ENCODE measurements at regions of chr6 and their contacts with region 1.

Region 1: DNA sequence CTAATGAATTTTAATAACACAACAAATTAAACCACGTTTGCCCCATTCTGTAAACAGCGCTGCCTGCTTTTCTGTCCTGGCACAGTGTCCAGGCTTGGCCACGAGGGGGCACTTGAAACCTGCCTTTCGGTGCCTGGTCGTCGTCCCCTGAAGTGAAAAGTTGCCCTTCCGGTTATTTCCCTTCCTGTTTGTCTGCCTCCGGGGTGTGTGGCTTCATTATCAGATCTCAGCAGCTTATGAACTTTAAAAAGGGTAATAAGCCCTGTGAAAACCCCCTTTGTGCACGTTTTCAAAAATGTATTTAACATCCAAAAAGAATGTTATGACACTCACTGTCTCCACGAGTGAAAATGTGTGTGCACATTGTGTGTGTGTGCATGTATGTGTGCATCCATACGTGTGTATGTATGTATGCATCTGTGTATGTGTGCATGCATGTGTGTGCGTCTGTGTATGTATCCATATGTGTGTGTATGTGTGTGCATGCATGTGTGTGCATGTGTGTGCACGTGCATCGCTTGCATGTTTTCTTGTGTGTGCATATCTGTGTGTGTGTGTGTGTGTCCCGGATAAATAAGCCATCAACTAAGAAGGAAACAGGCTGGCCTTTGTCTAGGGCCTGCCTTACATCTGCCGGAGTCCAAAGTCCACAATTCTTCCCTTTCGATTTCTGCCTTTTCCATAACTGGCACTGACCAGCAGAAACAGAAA is 358.4 kb downstream of the THBS2 start:
- DNase-seq: peak; percentile 64
- H3K4me3 ChIP-seq: no peak overlapping the region
- H3K27ac ChIP-seq: no peak overlapping the region
- H3K4me1 ChIP-seq: peaks cover 4% of the 10 kb centered on the region
- H3K27me3 ChIP-seq: no peaks in the 10 kb centered on the region
- CTCF ChIP-seq: peak; percentile 95 to 96

Region 2: DNA sequence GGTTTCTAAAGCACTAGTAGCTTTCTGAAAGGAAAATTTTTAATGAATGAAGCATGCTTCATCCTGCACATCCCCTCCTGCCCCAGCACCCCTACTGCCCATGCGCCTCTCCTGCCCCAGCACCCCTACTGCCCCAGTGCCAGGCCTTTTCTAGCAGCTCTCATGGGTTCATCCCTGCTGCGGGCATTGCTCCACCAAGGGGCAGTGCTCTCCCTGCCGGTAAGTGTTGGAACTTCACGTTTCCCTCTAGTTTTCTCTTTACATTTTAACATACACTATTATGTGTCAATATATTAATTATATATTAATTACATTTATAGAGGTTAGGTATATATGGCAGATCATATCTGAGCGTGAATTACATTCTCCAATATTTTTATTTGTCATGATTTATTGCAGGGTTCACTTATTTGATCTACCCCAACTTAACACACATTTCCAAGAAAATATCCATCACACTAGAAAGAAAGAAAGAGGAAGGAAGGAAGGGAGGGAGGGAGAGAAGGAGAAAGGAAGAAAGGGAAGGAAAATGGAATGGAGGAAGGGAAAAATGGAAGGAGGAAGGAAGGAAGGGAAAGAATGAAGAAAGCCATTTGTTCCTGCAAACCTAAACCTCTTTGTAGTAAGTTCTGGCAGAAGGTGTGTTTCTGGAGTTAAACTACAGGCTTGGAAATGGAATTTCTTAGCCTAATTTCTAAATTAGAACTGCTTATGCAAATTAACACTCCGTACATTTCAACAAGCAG is 1849.2 kb before region 1 on chr6:
- CTCF ChIA-PET with region 1: interaction called, 13 read pairs
- dilution Hi-C with region 1: no loop called
- in situ Hi-C with region 1: no loop called
- intact Hi-C with region 1: no loop called
- DNase-seq: no peak
- H3K4me3 ChIP-seq: no peak overlapping the region
- H3K27ac ChIP-seq: no peak overlapping the region
- H3K4me1 ChIP-seq: no peaks in the 10 kb centered on the region
- H3K27me3 ChIP-seq: no peaks in the 10 kb centered on the region
- CTCF ChIP-seq: peak; percentile 35 to 51

Region 3: GRCh38 chr6:167907837-167908681 is 987.2 kb before region 1 on chr6:
- CTCF ChIA-PET with region 1: no interaction called
- dilution Hi-C with region 1: no loop called
- in situ Hi-C with region 1: loop called in 1 of 2 experiments (anchors 25 kb)
- intact Hi-C with region 1: no loop called
- DNase-seq: peak; percentile 50
- H3K4me3 ChIP-seq: no peak overlapping the region
- H3K27ac ChIP-seq: no peak overlapping the region
- H3K4me1 ChIP-seq: peaks cover 5% of the 10 kb centered on the region
- H3K27me3 ChIP-seq: no peaks in the 10 kb centered on the region
- CTCF ChIP-seq: peak; percentile 44 to 52

Region 4: DNA sequence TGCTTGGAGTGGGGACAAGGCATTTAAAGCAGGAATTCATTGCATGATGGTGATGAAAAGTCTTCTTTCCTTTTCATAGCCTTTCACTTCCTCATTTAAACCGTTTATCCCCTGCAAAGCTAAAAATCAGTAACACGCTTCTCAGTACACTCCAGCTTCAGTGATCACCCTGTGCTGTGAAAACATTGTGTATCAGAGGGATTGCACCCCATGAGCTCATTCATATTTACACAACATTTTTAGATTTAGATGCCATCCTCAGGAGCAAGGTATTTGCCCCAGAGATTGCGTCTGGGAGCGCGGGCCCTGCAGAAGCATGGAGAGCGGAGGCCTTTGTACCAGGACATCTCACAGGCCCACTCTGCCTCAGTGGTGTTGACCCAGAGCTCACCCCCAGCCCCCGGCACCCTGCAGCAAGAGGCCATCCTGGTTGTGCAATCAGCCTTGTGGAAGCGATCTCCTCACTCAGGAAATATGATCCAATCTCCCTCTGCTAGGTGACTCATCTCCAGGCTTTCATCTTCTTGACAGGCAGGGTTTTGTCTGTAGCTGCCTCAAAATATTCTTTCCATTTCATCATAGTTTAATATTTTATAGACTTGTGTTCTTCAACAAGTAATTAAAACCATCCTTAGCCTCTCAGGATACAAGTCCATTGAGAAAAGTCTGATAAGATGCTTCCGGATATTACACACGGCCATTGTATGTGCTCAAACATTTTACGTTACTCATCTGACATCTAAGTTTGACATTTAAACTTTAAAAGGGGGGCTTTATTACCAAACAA is 397.3 kb after region 1 on chr6:
- CTCF ChIA-PET with region 1: no interaction called
- dilution Hi-C with region 1: no loop called
- in situ Hi-C with region 1: no loop called
- intact Hi-C with region 1: no loop called
- DNase-seq: peak; percentile 91
- H3K4me3 ChIP-seq: no peak overlapping the region
- H3K27ac ChIP-seq: peak overlapping the region; percentile 50
- H3K4me1 ChIP-seq: peaks cover 67% of the 10 kb centered on the region
- H3K27me3 ChIP-seq: no peaks in the 10 kb centered on the region
- CTCF ChIP-seq: no peak

Region 5: DNA sequence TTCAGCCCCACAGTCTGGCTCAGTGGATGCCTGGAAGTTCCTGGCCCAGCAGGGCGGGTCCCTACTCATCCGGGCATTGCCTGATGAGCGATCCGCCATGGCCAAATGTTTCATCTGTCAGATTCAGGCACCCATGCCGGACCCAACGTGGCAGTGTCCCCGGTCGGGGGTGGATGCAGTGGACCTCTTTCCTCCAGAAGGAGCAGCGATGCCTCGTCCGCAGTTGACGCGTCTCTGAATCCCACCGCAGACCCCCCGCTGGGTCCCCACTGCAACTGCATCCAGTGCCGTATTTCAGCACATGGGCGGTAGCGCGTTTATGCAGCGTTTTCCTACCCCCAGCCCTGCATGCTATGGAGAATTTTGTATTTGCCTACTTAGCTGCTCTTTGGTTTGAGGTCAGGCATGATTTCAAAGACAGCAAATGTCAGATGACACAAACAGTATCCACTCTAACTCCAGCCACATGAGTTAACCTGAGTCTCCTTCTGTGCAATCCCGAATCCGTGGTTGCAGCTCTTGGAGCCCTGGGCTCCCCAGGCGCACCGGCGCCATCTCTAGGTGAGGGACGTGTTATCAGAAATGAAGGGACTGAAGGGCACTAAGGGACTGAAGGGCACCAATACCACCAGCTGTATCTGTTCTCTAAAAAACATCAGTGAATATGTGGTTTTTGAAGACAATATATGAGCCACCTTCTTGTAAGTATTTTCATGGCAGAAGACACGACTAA is 431.0 kb after region 1 on chr6:
- CTCF ChIA-PET with region 1: no interaction called
- dilution Hi-C with region 1: no loop called
- in situ Hi-C with region 1: no loop called
- intact Hi-C with region 1: loop called (anchors 1 kb)
- DNase-seq: peak; percentile 52
- H3K4me3 ChIP-seq: no peak overlapping the region
- H3K27ac ChIP-seq: no peak overlapping the region
- H3K4me1 ChIP-seq: peaks cover 7% of the 10 kb centered on the region
- H3K27me3 ChIP-seq: no peaks in the 10 kb centered on the region
- CTCF ChIP-seq: peak; percentile 19 to 54

Region 6: GRCh38 chr6:169487579-169488436 is 592.6 kb after region 1 on chr6:
- CTCF ChIA-PET with region 1: no interaction called
- dilution Hi-C with region 1: no loop called
- in situ Hi-C with region 1: no loop called
- intact Hi-C with region 1: loop called (anchors 2 kb)
- DNase-seq: no peak
- H3K4me3 ChIP-seq: no peak overlapping the region
- H3K27ac ChIP-seq: no peak overlapping the region
- H3K4me1 ChIP-seq: no peaks in the 10 kb centered on the region
- H3K27me3 ChIP-seq: no peaks in the 10 kb centered on the region
- CTCF ChIP-seq: peak; percentile 12 to 22

Region 7: DNA sequence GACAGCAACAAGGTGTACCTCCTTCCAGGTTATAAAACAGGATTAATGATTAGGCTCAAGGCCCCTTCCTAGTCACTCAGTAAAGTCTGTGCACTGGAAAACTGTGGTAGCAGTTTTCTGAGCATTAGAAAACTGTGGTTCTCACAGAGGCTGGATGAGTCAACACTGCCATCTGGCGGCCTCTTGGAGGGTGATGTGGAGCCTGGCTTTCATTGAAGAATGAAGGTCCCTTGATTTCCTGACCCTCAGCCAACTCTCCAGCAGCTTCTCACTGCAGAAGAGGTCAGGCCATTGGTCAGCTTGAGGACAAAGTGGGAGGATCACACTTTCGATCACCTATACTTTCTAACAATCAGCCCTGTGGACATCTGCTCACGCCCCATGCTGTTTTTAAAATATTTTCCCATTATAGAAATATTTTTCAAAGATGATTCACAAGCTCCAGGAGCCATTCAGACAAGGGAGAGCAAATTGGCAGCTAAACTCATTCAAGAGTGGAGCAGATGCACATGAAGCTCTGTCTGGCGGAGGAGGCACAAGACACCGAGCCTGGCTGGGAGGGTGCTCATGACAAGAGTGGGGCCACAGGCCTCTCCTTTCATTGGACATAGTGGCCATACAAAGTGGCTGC is 1634.7 kb after region 1 on chr6:
- CTCF ChIA-PET with region 1: no interaction called
- dilution Hi-C with region 1: no loop called
- in situ Hi-C with region 1: no loop called
- intact Hi-C with region 1: loop called (anchors 5 kb)
- DNase-seq: peak; percentile 48
- H3K4me3 ChIP-seq: no peak overlapping the region
- H3K27ac ChIP-seq: no peak overlapping the region
- H3K4me1 ChIP-seq: no peaks in the 10 kb centered on the region
- H3K27me3 ChIP-seq: no peaks in the 10 kb centered on the region
- CTCF ChIP-seq: peak; percentile 90 to 96